Activated CD4-positive, alpha-beta T cell treated with anti-CD3 and anti-CD28 coated beads for 36 hours (primary cell): ENCODE measurements at regions of chr13 and their contacts with region 1.

Region 1: DNA sequence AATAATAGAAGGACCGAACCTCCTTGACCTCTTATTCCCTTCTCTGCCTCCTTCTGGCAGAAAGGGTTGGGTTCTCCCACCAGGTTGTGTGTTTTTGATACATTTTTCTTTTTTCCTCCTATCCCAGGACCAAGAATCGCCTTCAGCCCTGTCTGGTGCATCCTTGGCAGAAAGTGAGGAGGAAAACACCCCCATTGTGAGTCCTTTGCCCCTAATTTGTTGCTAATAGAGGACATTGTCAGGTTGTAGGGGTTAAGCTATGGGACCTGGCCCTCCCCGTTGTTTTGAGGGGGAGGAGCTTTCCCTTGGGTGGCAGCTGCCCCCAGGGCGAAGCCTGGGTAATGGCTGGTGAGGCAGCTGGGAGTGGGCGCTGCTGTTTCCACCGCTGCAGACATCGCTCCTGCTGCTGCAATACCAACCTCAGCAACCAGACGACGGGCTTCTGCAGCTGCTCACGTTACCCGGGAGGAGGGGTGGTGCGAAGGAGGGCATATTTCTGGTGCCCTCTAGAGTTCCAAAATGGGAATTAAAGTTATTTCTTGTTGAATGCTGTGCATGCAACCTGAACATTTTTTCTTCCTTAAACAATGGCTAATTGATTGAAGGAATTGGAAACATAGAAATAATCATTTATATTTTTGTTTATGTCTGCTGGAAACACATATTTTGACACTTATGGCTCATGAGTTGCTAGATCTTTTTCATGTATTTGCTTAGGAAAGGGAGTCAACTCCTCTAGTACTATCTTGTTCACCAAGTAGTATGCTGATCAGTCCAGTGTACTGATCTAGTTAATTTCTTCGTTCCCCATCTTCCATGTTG is 1.5 kb downstream of the ZMYM2 start:
- DNase-seq: peak; percentile 94
- ATAC-seq: peak; percentile 64
- H3K4me3 Mint-ChIP-seq: peak overlapping the region; percentile 87
- H3K27ac Mint-ChIP-seq: peak overlapping the region; percentile 94
- H3K4me1 Mint-ChIP-seq: peaks cover 38% of the 10 kb centered on the region
- H3K27me3 Mint-ChIP-seq: no peaks in the 10 kb centered on the region

Region 2: DNA sequence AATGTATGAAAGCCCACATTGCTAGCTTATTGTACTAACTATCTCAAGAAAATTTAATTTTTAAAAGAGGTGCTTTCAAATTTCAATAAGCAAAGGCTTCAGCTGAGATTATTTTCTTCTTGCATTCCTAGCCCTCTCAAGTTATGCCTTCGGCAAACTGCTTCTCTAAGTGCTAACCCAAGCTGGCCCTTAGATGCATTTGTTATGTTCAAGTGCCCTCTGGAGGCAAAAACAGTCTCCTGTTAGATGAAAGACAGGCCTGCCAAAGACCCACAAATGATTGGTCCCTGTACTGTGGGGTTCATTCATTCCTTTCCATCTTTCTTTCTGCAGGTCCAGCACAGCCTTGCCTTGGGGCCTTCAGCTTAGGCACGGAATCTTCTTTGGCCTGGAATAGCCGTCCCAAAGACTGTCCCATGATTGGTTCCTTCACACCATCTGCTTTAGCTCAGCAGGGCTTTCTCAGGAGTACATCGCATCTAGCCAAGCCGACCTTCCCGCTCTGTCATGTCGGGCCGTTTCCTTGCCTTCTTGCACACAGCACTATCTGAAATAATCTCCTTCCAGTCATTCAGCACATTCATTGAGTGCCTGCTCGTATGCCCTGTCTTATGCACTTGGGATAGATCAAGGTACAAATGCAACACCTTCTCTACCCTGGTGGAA is 372.3 kb before region 1 on chr13:
- CTCF ChIA-PET with region 1: interaction called, 4 read pairs
- POLR2A ChIA-PET with region 1: no interaction called
- intact Hi-C with region 1: loop called in 1 of 2 experiments (anchors 2 kb)
- DNase-seq: peak; percentile 46
- ATAC-seq: peak; percentile 67
- H3K4me3 Mint-ChIP-seq: peak overlapping the region; percentile 78
- H3K27ac Mint-ChIP-seq: peak overlapping the region; percentile 93
- H3K4me1 Mint-ChIP-seq: peaks cover 14% of the 10 kb centered on the region
- H3K27me3 Mint-ChIP-seq: no peaks in the 10 kb centered on the region

Region 3: GRCh38 chr13:19782049-19782726 is 177.9 kb before region 1 on chr13:
- CTCF ChIA-PET with region 1: no interaction called
- POLR2A ChIA-PET with region 1: interaction called, 3 read pairs
- intact Hi-C with region 1: loop called (anchors 1 to 2 kb)
- DNase-seq: peak; percentile 75
- ATAC-seq: peak; percentile 45
- H3K4me3 Mint-ChIP-seq: peak overlapping the region; percentile 94
- H3K27ac Mint-ChIP-seq: peak overlapping the region; percentile 98
- H3K4me1 Mint-ChIP-seq: peaks cover 5% of the 10 kb centered on the region
- H3K27me3 Mint-ChIP-seq: no peaks in the 10 kb centered on the region

Region 4: DNA sequence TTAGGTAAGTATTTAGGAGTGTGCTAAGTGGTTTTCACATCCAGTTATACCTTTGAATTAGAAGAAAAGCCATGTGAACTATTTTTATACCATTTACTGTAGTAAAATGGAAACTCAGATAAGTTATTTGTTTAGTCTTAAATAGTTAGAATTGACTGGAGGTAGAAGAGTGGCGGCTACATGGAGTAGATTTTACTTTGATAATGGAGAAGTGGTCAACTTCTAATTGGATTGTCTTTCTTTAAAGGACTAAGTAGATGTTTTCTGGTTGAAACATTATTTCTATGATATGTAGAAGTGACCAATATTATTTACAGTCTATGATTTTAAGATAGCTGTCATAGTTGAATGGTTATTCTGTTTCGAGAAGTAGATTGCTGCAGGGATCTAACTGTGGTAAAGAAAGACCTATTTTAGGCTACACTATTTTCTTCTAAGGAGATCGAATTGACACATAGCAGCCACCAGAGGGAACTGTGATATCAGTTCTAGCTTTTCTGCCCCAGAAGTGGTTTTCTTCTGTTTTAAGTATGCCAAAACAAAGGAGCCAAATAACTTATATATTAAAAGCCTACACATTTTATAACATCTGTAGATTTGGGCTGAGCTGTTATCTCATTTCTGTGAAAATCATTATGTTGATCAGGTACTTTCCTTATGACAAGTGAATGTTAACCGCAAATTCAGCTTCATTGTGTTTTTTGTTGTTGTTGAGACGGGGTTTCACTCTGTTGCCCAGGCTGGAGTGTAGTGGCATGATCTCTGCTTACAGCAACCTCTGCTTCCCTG is 24.6 kb after region 1 on chr13:
- CTCF ChIA-PET with region 1: interaction called, 7 read pairs
- POLR2A ChIA-PET with region 1: interaction called, 3 read pairs
- intact Hi-C with region 1: loop called in 1 of 2 experiments (anchors 2 kb)
- DNase-seq: peak; percentile 12
- ATAC-seq: peak; percentile 68
- H3K4me3 Mint-ChIP-seq: no peak overlapping the region
- H3K27ac Mint-ChIP-seq: peak overlapping the region; percentile 34
- H3K4me1 Mint-ChIP-seq: peaks cover 38% of the 10 kb centered on the region
- H3K27me3 Mint-ChIP-seq: no peaks in the 10 kb centered on the region

Region 5: DNA sequence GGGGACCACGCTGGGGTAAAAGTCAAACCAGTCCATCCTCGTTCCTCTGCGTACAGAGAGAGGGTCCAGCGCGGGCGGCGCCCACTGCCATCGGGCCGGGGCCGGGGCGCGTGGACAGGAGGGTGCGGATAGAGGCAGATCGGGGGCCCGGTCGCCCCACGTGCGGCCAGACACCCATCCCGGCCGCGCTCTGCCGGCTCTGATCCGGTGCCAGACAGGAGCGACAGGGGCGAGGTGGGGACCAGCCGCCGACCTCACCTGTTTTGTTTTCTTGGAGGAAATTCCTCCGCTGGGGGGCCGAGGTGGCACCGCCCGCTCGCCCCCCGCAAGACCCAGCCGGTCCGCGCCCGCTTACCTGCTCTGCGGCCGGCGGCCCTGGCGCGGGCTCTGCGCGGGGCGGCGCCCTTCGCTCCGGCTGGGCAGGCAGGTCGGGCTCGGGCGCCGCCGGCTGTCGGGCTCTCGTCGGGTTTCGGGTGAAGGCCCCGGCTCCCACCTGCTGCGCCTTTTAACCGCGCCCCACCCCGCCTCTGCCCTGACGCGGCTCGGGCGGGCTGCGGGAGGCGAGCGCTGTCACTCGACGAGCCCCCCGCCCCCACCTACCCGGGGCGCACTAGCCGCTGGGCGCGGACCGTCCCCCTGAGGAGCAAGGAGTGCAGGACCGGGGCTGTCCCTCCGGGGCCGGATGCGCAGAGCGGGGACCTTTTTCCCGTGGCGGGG is 272.0 kb after region 1 on chr13 and contains the start of gene GJB6:
- CTCF ChIA-PET with region 1: no interaction called
- POLR2A ChIA-PET with region 1: no interaction called
- intact Hi-C with region 1: no loop called
- DNase-seq: peak; percentile 58
- ATAC-seq: peak; percentile 56
- H3K4me3 Mint-ChIP-seq: peak within 1 kb of the TSS; percentile 73
- H3K27ac Mint-ChIP-seq: peak within 1 kb of the TSS; percentile 65
- H3K4me1 Mint-ChIP-seq: peaks cover 11% of the 10 kb centered on the region
- H3K27me3 Mint-ChIP-seq: peaks cover 14% of the 10 kb centered on the region
- total RNA-seq, gene GJB6: 2.7 to 2.9 TPM

Region 6: DNA sequence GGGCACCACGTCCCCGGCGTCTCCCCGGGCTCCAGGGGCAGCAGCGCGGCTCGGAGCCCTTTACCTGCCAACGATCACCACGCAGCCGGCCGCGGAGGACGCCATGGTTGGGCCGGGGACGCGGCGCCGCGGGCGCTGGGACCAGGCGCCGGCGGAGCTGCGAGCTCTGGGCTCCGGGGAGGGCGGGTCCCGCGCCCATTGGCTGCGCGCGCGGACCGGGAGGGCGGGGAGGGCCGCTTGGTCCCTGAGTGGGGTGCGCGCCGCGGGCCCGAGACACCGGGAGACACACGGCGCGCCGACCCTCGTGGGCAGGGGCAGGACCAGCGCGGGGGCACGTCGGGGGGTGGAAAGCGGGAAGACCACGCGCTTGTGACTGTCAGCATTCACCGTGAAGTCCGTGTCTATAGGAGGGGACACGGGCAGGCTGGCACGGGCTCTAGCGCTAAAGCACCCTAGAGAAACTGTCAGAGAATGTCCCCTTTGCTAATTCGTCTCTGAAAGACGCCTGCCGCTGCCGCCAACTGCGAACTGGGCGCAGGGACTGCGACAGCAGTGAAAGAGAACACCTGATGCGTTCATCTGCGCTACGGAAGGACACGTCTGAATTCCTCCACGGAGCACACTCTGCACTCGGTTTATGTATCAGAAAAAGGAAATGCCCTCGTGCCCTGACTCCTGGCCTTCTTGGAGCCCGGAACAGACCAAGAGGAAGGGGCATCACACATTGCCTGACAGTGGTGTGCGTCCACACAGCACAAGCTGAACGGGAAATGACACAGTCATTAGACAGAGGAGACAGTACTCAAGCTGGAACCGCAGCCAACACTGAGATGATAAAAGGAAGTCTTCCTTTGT is 565.9 kb after region 1 on chr13 and contains the start of gene CRYL1:
- CTCF ChIA-PET with region 1: no interaction called
- POLR2A ChIA-PET with region 1: no interaction called
- intact Hi-C with region 1: loop called in 1 of 2 experiments (anchors 2 kb)
- DNase-seq: peak; percentile 81
- ATAC-seq: peak; percentile 86
- H3K4me3 Mint-ChIP-seq: peak within 1 kb of the TSS; percentile 86
- H3K27ac Mint-ChIP-seq: peak within 1 kb of the TSS; percentile 99
- H3K4me1 Mint-ChIP-seq: peaks cover 30% of the 10 kb centered on the region
- H3K27me3 Mint-ChIP-seq: no peaks in the 10 kb centered on the region
- total RNA-seq, gene CRYL1: 8.5 to 9.1 TPM

Region 7: DNA sequence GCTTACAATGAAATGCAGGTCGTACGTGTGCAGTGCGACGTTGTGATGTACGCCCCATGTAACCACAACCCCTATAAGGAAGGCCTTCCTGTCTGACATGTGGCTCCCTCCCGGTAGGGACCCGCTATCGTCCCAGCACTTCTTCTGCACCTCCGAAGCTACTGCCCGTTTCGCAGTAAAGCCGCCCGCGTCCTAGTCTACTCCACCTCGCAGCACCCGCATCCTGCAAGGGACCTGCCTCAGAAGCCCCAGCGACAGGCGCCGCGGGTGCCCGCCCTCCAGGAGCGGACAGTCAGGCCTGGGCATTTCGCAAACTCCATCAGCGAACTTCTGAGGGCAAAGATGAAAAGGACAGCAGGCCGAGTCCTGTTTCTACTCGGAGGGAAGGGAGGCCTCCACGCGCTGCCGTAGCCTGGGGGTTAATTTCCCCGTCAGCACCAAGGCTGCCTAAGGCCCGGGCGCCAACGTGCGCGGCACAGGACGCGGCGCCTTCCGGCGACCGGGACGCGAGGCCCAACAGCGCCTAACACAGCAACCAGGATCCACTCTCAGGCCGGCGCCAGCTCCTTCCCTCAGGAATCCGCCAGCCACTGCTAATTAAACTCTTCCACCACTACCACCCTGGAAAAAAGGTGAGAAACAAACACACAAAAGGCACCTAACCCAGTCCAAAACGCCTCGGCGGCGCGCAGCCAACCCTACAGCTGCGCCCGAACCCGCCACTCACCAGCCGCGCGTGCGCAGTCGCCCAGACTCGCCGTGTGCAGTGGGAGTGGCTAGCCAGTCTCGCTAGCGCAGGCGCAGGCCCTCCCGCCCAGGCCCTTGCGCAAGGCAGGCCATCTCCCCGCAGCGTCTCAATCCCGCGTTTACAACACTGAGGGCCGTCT is 813.4 kb after region 1 on chr13 and contains the start of gene EEF1AKMT1:
- CTCF ChIA-PET with region 1: interaction called, 3 read pairs
- POLR2A ChIA-PET with region 1: no interaction called
- intact Hi-C with region 1: loop called in 1 of 2 experiments (anchors 1 kb)
- DNase-seq: peak; percentile 98
- ATAC-seq: peak; percentile 92
- H3K4me3 Mint-ChIP-seq: peak within 1 kb of the TSS; percentile 93
- H3K27ac Mint-ChIP-seq: peak within 1 kb of the TSS; percentile 100
- H3K4me1 Mint-ChIP-seq: peaks cover 45% of the 10 kb centered on the region
- H3K27me3 Mint-ChIP-seq: no peaks in the 10 kb centered on the region
- total RNA-seq, gene EEF1AKMT1: 21.0 to 23.9 TPM

Region 8: GRCh38 chr13:21603531-21604448 is 1643.7 kb after region 1 on chr13 and contains the start of gene MICU2:
- CTCF ChIA-PET with region 1: no interaction called
- POLR2A ChIA-PET with region 1: no interaction called
- intact Hi-C with region 1: loop called in 1 of 2 experiments (anchors 5 kb)
- DNase-seq: peak; percentile 97
- ATAC-seq: peak; percentile 96
- H3K4me3 Mint-ChIP-seq: peak within 1 kb of the TSS; percentile 85
- H3K27ac Mint-ChIP-seq: peak within 1 kb of the TSS; percentile 94
- H3K4me1 Mint-ChIP-seq: peaks cover 35% of the 10 kb centered on the region
- H3K27me3 Mint-ChIP-seq: peaks cover 1% of the 10 kb centered on the region
- total RNA-seq, gene MICU2: 28.4 to 28.7 TPM